Left ventricle myocardium inferior (tissue), 1 donor: ENCODE measurements at regions of chr18 and their contacts with region 1.

Region 1: GRCh38 chr18:24271381-24272331 is 126.0 kb downstream of the OSBPL1A start:
- DNase-seq: peak; percentile 75
- H3K4me3 ChIP-seq: peak overlapping the region; percentile 92
- H3K27ac ChIP-seq: peak overlapping the region; percentile 99
- H3K4me1 ChIP-seq: peaks cover 62% of the 10 kb centered on the region
- H3K27me3 ChIP-seq: no peaks in the 10 kb centered on the region
- CTCF ChIP-seq: peak; percentile 51

Region 2: DNA sequence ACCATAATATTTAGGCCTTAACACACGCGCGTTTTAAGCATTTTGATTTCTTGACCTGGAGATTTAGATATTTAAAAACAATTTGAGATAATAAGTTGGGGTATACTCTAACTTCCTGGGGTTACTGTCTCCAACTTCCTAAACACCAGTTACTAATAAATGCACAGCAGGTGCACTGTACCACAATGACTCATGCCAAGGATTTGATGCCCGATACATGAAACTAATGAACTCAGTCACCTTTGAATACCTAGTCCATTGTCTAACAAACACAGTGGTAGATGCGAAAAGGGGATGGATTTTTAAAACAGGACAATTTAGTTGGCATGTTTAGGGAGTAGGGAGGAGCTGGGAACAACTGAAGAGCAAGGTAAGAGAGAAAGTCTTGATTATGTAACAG is 111.6 kb before region 1 on chr18:
- intact Hi-C with region 1: loop called (anchors 10 kb)
- DNase-seq: no peak
- H3K4me3 ChIP-seq: no peak overlapping the region
- H3K27ac ChIP-seq: no peak overlapping the region
- H3K4me1 ChIP-seq: peaks cover 7% of the 10 kb centered on the region
- H3K27me3 ChIP-seq: no peaks in the 10 kb centered on the region
- CTCF ChIP-seq: no peak

Region 3: GRCh38 chr18:24231773-24232735 is 39.6 kb before region 1 on chr18:
- intact Hi-C with region 1: loop called (anchors 5 kb)
- DNase-seq: no peak
- H3K4me3 ChIP-seq: peak overlapping the region; percentile 35
- H3K27ac ChIP-seq: peak overlapping the region; percentile 87
- H3K4me1 ChIP-seq: peaks cover 86% of the 10 kb centered on the region
- H3K27me3 ChIP-seq: no peaks in the 10 kb centered on the region
- CTCF ChIP-seq: peak; percentile 7